ENCODE measurements at regions of chr6 and their contacts with region 1.

Region 1: GRCh38 chr6:82138075-82138791 is 109.3 kb downstream of the IBTK start:
- DNase-seq: no peak
- ATAC-seq: no peak
- H3K4me3 ChIP-seq: no peak overlapping the region
- H3K27ac ChIP-seq: no peak overlapping the region
- H3K4me1 ChIP-seq: no peaks in the 10 kb centered on the region; the same call in 1 of the 2 replicates
- H3K27me3 ChIP-seq: no peaks in the 10 kb centered on the region
- CTCF ChIP-seq: no peak

Region 2: DNA sequence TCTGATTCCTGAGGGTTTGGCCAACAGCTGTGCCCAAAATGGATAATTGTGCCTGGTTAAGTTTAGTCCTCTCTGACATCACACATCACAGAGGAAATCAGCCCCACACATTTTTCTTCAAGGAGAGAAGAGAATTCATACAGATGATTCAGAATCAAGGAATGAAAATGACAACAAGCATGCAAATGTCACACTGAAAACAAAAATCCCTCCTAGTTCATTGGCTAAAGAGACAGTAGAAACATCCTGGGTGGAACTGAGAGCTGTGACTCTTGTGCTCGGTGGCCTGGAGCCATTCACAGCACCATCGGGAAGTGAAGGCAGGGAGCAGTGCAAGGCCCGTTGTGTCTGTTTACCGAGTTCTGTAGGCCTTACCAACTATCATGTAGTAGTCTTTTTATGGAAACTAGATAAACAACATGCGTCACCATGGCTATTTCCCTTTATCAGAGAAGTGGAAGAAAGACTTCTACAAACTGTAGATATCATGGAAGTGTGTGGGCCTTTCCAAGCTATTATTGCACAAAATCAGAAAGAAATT is 304.0 kb before region 1 on chr6:
- CTCF ChIA-PET with region 1: no interaction called
- POLR2A ChIA-PET with region 1: interaction called, 23 read pairs
- intact Hi-C with region 1: no loop called
- DNase-seq: peak; percentile 53
- ATAC-seq: peak; percentile 37
- H3K4me3 ChIP-seq: no peak overlapping the region
- H3K27ac ChIP-seq: no peak overlapping the region
- H3K4me1 ChIP-seq: no peaks in the 10 kb centered on the region; the same call in 1 of the 2 replicates
- H3K27me3 ChIP-seq: no peaks in the 10 kb centered on the region
- CTCF ChIP-seq: no peak

Region 3: GRCh38 chr6:82066991-82067411 is 71.2 kb before region 1 on chr6:
- CTCF ChIA-PET with region 1: no interaction called
- POLR2A ChIA-PET with region 1: no interaction called
- intact Hi-C with region 1: no loop called
- DNase-seq: no peak
- ATAC-seq: no peak
- H3K4me3 ChIP-seq: no peak overlapping the region
- H3K27ac ChIP-seq: no peak overlapping the region
- H3K4me1 ChIP-seq: no peaks in the 10 kb centered on the region
- H3K27me3 ChIP-seq: no peaks in the 10 kb centered on the region
- CTCF ChIP-seq: no peak

Region 4: DNA sequence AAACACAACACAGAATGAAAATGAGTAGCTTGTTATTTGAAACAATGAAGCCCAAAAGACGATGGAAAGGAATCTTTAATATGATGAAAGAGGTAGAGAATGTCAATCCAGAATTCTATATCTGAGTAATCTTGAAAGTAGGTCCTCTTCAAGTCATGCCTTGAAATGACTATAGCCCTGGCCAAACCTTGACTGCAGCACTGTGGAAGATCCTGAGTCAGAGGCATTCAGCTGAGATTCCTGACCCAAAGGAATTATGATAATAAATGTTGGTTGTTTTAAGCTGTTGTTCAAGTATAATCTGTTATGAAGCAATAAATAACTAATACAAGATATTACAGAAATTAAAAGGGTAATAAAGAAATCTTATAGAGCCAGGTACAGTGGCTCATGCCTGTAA is 44.5 kb after region 1 on chr6:
- CTCF ChIA-PET with region 1: no interaction called
- POLR2A ChIA-PET with region 1: no interaction called
- intact Hi-C with region 1: no loop called
- DNase-seq: no peak
- ATAC-seq: no peak
- H3K4me3 ChIP-seq: no peak overlapping the region
- H3K27ac ChIP-seq: no peak overlapping the region
- H3K4me1 ChIP-seq: peaks cover 11% of the 10 kb centered on the region; the same call in 1 of the 2 replicates
- H3K27me3 ChIP-seq: no peaks in the 10 kb centered on the region
- CTCF ChIP-seq: no peak

Region 5: DNA sequence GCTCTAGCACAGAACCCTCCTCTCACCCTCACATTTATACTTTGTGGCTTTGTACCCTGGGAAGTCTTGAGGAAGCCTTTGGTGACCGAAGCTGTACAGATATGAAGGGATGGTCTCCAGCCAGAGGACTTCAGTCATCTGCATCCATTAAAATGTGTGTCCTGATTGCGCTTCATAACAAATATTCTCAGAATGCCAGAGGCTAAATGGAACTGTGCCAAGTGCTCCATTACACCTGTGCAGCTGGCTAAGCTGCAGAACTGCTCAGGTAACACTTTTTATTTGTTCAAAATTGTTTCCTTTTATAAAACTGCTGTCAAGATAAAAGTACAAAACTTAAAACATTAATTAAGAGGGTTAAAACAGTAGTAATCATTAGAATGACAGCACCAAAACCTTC is 247.7 kb after region 1 on chr6:
- CTCF ChIA-PET with region 1: no interaction called
- POLR2A ChIA-PET with region 1: no interaction called
- intact Hi-C with region 1: no loop called
- DNase-seq: peak; percentile 79
- ATAC-seq: no peak
- H3K4me3 ChIP-seq: no peak overlapping the region
- H3K27ac ChIP-seq: peak overlapping the region; percentile 6; the same call in 1 of the 2 replicates
- H3K4me1 ChIP-seq: peaks cover 20% of the 10 kb centered on the region
- H3K27me3 ChIP-seq: no peaks in the 10 kb centered on the region
- CTCF ChIP-seq: no peak

Measured in PC-3 (cell line).